Heart right ventricle (tissue), 16 donors: ENCODE measurements at regions of chr10 and their contacts with region 1.

Region 1: DNA sequence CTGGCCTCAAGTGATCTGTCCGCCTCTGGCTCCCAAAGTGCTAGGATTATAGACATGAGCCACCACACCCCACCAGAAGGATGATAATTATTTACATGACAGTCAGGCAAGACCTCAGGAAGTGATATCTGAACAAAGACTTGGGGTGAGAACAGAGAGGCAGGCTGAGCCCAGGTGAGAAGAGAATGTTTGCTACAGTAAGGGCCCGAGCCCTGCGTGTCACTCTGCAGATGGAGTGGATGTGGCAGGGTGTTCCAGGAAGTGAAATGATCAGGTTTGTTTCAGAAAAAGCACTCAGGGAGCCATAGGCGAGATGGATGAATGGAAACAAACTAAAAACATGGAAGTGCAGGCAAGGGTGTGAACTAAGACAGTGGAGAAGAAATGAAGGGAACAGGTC is 22.2 kb downstream of the SFMBT2 start:
- DNase-seq: no peak
- ATAC-seq: peak in 2 of 8 donors; percentile 21 to 42
- H3K4me3 ChIP-seq: no peak overlapping the region
- H3K27ac ChIP-seq: peak overlapping the region in 9 of 10 donors; percentile 3 to 62 (median 41)
- H3K4me1 ChIP-seq: peaks cover 0 to 50% (median 25%) of the 10 kb centered on the region in 9 donors
- H3K27me3 ChIP-seq: no peaks in the 10 kb centered on the region
- CTCF ChIP-seq: no peak

Region 2: DNA sequence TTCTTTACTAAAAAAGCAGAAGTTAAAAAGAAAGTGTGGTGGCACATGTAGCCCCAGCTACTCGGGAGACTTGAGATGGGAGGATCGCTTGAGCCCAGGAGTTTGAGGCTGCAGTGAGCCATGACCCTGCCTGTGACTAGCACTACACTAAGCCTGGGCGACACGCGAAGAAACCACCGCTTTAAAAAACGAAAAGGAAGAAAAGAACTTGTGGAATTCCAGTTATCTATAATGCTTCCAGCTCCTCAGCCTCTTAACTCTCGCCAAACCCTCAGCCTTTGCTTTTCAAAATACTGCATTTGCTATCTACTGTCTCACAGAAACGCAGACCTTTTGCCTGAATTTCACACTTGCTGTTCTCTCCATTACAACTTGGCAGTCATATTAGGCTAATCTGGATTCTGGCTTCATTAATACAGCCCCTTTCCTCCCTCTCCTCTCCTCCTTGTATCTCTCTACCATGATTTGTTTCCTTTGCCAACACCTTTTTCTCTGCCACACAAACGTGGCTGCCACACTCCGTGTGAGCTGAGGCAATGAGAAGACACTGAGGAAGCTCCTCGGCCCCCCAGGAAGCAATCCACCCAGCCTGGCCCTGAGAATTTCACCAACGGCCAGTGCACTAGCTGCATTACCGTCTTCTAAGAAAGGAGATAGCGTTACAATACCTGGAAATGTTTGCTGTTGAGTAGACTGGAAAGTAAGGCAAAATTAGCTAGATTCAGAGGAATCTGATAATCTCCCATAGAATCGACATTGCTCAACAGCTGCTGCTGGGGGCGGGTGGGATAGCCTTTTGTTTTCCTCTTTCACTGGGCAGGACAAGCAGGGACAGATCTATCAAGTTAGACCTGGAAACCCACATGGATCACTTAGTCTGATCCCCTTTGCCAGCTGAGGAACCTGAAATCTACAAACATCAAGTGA is 1926.4 kb before region 1 on chr10:
- intact Hi-C with region 1: loop called in 1 of 10 experiments (anchors 5 kb)
- DNase-seq: no peak
- ATAC-seq: no peak
- H3K4me3 ChIP-seq: no peak overlapping the region
- H3K27ac ChIP-seq: no peak overlapping the region
- H3K4me1 ChIP-seq: peaks cover 0 to 12% (median 3%) of the 10 kb centered on the region in 9 donors
- H3K27me3 ChIP-seq: no peaks in the 10 kb centered on the region
- CTCF ChIP-seq: no peak

Region 3: GRCh38 chr10:6713716-6714115 is 674.9 kb before region 1 on chr10:
- intact Hi-C with region 1: no loop called
- DNase-seq: no peak
- ATAC-seq: no peak
- H3K4me3 ChIP-seq: no peak overlapping the region
- H3K27ac ChIP-seq: no peak overlapping the region
- H3K4me1 ChIP-seq: no peaks in the 10 kb centered on the region
- H3K27me3 ChIP-seq: peaks cover 0 to 50% (median 31%) of the 10 kb centered on the region in 7 donors
- CTCF ChIP-seq: no peak

Region 4: GRCh38 chr10:7161484-7162250 is 226.9 kb before region 1 on chr10:
- intact Hi-C with region 1: no loop called
- DNase-seq: peak; percentile 23 to 25
- ATAC-seq: peak in 7 of 8 donors; percentile 41 to 83 (median 68)
- H3K4me3 ChIP-seq: no peak overlapping the region
- H3K27ac ChIP-seq: peak overlapping the region in 2 of 10 donors; percentile 4 to 8
- H3K4me1 ChIP-seq: peaks cover 0 to 11% (median 0%) of the 10 kb centered on the region in 9 donors
- H3K27me3 ChIP-seq: no peaks in the 10 kb centered on the region
- CTCF ChIP-seq: no peak

Region 5: DNA sequence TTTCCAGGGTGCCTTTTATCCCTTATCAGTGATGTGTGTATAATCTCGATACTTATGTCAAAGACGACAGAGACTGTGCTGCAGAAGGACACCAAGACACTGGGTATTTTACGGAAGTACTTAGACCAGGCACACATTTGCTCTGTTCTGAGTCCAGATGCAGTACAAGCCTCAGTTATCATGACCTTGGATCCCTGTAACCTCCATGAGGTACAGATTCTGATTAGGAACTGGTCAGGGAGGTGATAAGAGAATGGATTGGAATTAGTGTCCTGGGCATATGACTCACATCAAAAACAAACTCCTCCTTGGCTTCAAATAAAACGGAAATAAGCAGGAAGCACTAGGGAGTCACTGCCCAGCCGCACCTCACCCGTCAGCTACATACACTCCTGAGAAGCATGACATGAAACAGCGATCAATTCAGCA is 124.3 kb before region 1 on chr10:
- intact Hi-C with region 1: no loop called
- DNase-seq: no peak
- ATAC-seq: peak in 5 of 8 donors; percentile 4 to 47 (median 34)
- H3K4me3 ChIP-seq: no peak overlapping the region
- H3K27ac ChIP-seq: peak overlapping the region in 7 of 10 donors; percentile 4 to 48 (median 23)
- H3K4me1 ChIP-seq: peaks cover 7 to 54% (median 28%) of the 10 kb centered on the region in 9 donors
- H3K27me3 ChIP-seq: no peaks in the 10 kb centered on the region
- CTCF ChIP-seq: no peak

Region 6: GRCh38 chr10:7507887-7508726 is 119.5 kb after region 1 on chr10:
- intact Hi-C with region 1: no loop called
- DNase-seq: no peak
- ATAC-seq: no peak
- H3K4me3 ChIP-seq: no peak overlapping the region
- H3K27ac ChIP-seq: peak overlapping the region in 1 of 10 donors; percentile 60
- H3K4me1 ChIP-seq: peaks cover 0 to 6% (median 0%) of the 10 kb centered on the region in 9 donors
- H3K27me3 ChIP-seq: peaks cover 0 to 3% (median 0%) of the 10 kb centered on the region in 7 donors
- CTCF ChIP-seq: no peak